ENCODE measurements at regions of chr1 and their contacts with region 1.

Region 1: DNA sequence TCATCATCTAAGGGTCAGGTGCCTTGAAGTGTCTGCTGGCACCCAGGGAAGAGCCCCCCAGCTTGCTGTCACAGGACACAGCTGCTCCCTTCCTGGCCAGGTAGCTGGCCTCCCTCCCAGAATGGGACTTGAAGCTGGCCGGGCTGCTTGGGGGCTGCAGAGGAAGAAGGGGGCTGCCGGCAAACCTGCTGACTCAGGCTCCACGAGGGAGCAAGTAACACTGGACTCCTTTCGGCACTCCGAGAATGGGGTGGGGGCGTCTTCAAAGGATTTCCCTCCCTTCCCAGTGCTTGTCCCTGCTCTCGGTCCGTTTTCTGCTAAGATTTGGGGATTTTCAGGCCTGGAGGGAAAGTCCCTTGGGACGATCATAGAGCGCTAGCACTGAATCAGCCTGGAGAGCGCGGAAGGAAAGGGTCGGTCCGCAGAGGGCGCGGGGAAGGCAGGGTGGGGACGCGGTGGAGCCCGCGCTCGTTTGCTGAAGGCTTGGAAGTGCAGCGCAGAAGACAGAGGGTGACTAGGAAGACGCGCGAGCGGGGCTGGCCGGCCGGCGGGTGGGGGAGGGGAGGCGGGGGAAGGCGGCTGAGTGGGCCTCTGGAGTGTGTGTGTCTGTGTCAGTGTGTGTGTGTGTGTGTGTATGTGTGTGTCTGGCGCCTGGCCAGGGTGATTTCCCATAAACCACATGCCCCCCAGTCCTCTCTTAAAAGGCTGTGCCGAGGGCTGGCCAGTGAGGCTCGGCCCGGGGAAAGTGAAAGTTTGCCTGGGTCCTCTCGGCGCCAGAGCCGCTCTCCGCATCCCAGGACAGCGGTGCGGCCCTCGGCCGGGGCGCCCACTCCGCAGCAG is at the start of gene CSF1:
- DNase-seq: peak; percentile 86
- ATAC-seq: peak; percentile 68
- H3K4me3 ChIP-seq: peak within 1 kb of the TSS; percentile 98
- H3K27ac ChIP-seq: peak within 1 kb of the TSS; percentile 85
- H3K4me1 ChIP-seq: peaks cover 25% of the 10 kb centered on the region
- H3K27me3 ChIP-seq: no peaks in the 10 kb centered on the region; the same call in 1 of the 2 replicates
- CTCF ChIP-seq: no peak
- POLR2A ChIP-seq: peak; percentile 84
- RAD21 ChIP-seq: peak; percentile 4; the same call in 1 of the 2 replicates
- total RNA-seq, gene CSF1: 9.4 and 14.3 TPM in 2 replicates

Region 2: GRCh38 chr1:109643385-109644230 is 266.7 kb before region 1 on chr1:
- CTCF ChIA-PET with region 1: no interaction called
- POLR2A ChIA-PET with region 1: no interaction called
- dilution Hi-C with region 1: no loop called
- in situ Hi-C with region 1: loop called (anchors 10 kb)
- intact Hi-C with region 1: no loop called
- DNase-seq: peak; percentile 65
- ATAC-seq: peak; percentile 77
- H3K4me3 ChIP-seq: no peak overlapping the region
- H3K27ac ChIP-seq: no peak overlapping the region
- H3K4me1 ChIP-seq: peaks cover 11% of the 10 kb centered on the region
- H3K27me3 ChIP-seq: no peaks in the 10 kb centered on the region
- CTCF ChIP-seq: peak; percentile 84
- POLR2A ChIP-seq: 0 out of 2 replicates have a peak, but pooled peaks have one; percentile 20
- RAD21 ChIP-seq: peak; percentile 87

Measured in IMR-90 (cell line).